ENCODE measurements at regions of chr6 and their contacts with region 1.

Region 1: GRCh38 chr6:32868257-32868788 is 14.3 kb downstream of the PSMB9 start:
- DNase-seq: peak; percentile 70
- ATAC-seq: peak; percentile 66
- H3K4me3 Mint-ChIP-seq: no peak overlapping the region
- H3K27ac Mint-ChIP-seq: no peak overlapping the region
- H3K4me1 Mint-ChIP-seq: peaks cover 35% of the 10 kb centered on the region
- H3K27me3 Mint-ChIP-seq: no peaks in the 10 kb centered on the region
- CTCF ChIP-seq: peak; percentile 42

Region 2: DNA sequence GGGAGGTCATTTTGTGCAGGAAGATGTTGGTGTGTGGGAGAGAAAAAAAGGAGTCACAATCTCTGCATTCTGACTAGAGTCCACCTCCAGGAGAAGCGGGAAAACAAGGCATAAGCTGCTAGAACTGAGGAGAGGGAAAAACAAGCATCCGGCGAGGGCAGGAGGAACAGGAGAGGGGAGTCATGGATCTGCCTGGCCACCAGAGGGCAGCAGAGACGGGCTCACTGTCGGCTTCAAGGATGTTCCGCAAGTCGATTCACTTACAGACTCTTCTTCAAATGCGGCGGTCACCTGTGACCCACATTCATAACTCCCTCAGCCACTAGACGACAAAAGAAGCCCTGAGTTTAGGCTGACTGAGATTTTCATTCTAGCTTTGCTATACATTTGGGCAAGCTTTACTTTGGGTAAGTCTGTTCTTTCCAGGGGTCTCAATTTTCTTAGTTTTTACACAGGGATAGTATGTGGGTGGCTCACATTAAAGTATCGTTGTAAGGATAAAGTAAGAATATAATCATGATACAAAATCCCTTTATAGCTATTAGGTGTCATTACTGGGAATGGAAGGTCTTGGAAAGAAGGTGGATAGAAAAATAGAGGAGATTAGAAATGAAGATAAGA is 454.8 kb before region 1 on chr6:
- CTCF ChIA-PET with region 1: interaction called, 39 read pairs
- POLR2A ChIA-PET with region 1: no interaction called
- intact Hi-C with region 1: loop called (anchors 1 kb)
- DNase-seq: peak; percentile 80
- ATAC-seq: peak; percentile 88
- H3K4me3 Mint-ChIP-seq: peak overlapping the region; percentile 75
- H3K27ac Mint-ChIP-seq: peak overlapping the region; percentile 5
- H3K4me1 Mint-ChIP-seq: peaks cover 14% of the 10 kb centered on the region
- H3K27me3 Mint-ChIP-seq: peaks cover 4% of the 10 kb centered on the region
- CTCF ChIP-seq: no peak

Region 3: DNA sequence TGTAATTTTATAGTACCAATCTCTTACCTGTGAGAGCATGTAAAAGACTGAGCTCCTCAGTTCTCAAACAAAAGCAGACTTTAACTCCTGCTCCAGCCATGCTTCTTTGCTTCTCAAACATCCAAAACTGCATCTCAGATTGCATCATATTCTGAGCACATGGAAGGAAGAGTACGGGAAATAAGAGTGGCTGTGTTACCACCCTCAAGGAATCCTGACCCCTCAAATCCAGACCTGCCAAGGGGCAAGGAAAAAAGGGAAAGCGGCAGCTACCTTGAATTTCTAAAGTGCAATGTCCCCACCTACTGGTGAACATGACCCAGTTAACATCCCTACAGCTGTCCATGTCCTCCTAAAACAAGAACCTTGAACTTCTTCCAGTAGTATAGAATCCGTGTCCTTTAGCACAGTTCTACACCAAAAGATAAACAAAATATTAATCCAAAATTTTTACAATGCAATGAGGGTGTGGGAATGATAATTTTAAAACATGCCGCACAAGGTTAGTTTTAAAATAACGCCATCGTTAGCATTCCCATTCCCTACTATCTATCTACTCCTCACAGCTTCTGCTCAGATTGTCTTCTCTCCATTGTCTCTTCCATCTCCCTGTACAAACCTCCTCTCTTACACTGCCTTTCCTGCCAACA is 167.8 kb before region 1 on chr6:
- CTCF ChIA-PET with region 1: interaction called, 24 read pairs
- POLR2A ChIA-PET with region 1: interaction called, 8 read pairs
- intact Hi-C with region 1: loop called (anchors 1 kb)
- DNase-seq: no peak
- ATAC-seq: peak; percentile 80
- H3K4me3 Mint-ChIP-seq: peak overlapping the region; percentile 86
- H3K27ac Mint-ChIP-seq: peak overlapping the region; percentile 91
- H3K4me1 Mint-ChIP-seq: peaks cover 32% of the 10 kb centered on the region
- H3K27me3 Mint-ChIP-seq: no peaks in the 10 kb centered on the region
- CTCF ChIP-seq: peak; percentile 32

Region 4: GRCh38 chr6:32816746-32817204 is 51.5 kb before region 1 on chr6 and contains the start of gene HLA-DOB:
- CTCF ChIA-PET with region 1: interaction called, 20 read pairs
- POLR2A ChIA-PET with region 1: interaction called, 4 read pairs
- intact Hi-C with region 1: no loop called
- DNase-seq: no peak
- ATAC-seq: peak; percentile 73
- H3K4me3 Mint-ChIP-seq: peak within 1 kb of the TSS; percentile 99
- H3K27ac Mint-ChIP-seq: peak within 1 kb of the TSS; percentile 99
- H3K4me1 Mint-ChIP-seq: peaks cover 96% of the 10 kb centered on the region
- H3K27me3 Mint-ChIP-seq: no peaks in the 10 kb centered on the region
- CTCF ChIP-seq: no peak
- total RNA-seq, gene HLA-DOB: 95.6 and 101 TPM in 2 replicates

Region 5: GRCh38 chr6:32843979-32844838 is 24.1 kb before region 1 on chr6 and contains the start of gene PSMB8:
- CTCF ChIA-PET with region 1: interaction called, 198 read pairs
- POLR2A ChIA-PET with region 1: interaction called, 904 read pairs
- intact Hi-C with region 1: no loop called
- DNase-seq: peak; percentile 96
- ATAC-seq: peak; percentile 78
- H3K4me3 Mint-ChIP-seq: peak within 1 kb of the TSS; percentile 99
- H3K27ac Mint-ChIP-seq: peak within 1 kb of the TSS; percentile 100
- H3K4me1 Mint-ChIP-seq: peaks cover 92% of the 10 kb centered on the region
- H3K27me3 Mint-ChIP-seq: no peaks in the 10 kb centered on the region
- CTCF ChIP-seq: no peak
- total RNA-seq, gene PSMB8: 182 and 194 TPM in 2 replicates

Region 6: DNA sequence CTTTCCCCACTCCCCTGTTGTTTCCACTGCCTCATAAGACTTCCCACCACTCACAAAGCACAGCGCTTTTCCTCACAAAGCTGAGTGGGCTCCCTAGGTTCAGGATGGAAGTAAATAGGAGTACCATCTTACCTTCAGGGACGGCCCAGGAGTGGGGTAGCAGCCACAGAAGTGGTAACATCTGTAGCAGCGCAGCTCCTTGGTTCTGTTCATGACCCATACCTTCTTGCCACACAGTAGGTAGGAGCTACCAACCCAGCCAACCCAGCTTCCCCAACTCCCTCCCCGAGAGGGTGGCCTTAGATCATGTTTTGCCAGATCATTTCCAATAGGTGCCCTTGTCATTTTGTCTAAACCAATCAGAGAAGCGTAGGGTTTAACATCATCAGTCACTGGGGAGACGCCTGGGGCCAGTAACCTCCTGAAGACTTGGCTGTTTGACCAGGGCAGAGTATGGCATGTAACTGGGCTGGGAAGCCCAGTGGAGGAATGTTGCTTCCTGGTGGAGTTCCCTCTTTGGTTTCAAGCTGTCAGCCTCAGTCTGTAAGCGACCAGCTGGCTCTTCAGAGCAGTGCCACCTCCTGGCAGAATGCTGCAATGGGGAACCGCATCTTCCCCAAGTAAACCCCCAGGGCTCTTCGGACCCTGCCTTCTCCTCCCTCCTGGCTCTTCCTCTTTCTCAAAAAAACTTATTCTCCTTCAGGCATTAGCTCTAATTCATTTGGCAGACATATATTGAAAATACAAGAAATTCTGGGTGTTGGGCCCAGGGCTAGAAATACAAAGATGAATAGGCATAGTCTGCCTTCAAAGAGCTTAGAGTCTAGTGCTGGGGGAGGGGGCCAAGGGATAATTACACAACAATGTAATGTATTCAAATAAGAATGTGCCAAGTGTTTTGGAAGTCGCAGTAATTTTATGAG is 84.8 kb after region 1 on chr6 and contains the start of gene HLA-DMA:
- CTCF ChIA-PET with region 1: interaction called, 14 read pairs
- POLR2A ChIA-PET with region 1: interaction called, 16 read pairs
- intact Hi-C with region 1: no loop called
- DNase-seq: peak; percentile 65
- ATAC-seq: peak; percentile 91
- H3K4me3 Mint-ChIP-seq: peak within 1 kb of the TSS; percentile 98
- H3K27ac Mint-ChIP-seq: peak within 1 kb of the TSS; percentile 97
- H3K4me1 Mint-ChIP-seq: peaks cover 85% of the 10 kb centered on the region
- H3K27me3 Mint-ChIP-seq: no peaks in the 10 kb centered on the region
- CTCF ChIP-seq: no peak
- total RNA-seq, gene HLA-DMA: 371 and 387 TPM in 2 replicates

Region 7: DNA sequence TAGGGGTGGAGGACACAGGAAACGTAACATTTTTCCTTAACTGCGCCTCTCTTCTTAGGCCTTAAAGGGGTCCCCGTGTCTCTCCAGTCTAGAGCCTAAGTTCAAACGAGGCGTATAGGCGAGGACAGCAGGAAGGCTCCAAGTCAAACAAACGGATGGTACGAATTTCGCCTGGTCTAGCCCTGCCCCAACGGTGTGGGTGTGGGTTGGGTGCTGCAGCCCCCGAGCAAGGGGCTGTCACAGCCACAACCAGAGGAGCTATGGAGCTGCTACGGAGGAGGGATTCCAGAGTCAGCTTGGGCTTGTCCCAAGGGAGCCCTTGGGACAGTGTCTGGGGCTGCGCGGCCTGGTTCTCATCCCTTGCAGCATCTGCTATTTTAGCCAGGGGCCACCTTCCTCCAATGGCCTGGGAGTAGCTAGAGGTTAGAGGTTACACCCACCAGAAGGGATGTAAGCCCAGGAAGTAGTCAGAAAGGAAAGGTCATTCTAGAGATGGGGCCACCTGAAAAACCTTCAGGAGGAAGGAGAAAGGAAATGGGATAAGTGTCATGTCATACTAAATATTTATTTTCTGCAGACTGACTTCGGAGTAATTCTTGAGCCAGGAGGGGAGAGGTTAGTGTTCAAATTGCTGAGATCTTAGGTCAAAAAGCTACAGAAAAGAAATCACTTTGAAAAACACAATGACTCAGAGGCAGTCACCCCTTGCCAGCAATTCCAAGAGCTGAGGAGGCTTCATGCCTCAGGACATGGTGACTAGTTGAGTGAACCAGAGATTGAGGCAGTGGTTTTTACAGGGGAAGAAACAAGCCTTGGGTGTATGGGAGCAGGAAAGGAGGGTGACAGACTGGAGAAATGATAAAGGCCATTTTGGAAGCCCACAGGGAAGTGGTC is 381.7 kb after region 1 on chr6:
- CTCF ChIA-PET with region 1: no interaction called
- POLR2A ChIA-PET with region 1: no interaction called
- intact Hi-C with region 1: no loop called
- DNase-seq: peak; percentile 22
- ATAC-seq: no peak
- H3K4me3 Mint-ChIP-seq: peak overlapping the region; percentile 91
- H3K27ac Mint-ChIP-seq: peak overlapping the region; percentile 91
- H3K4me1 Mint-ChIP-seq: peaks cover 28% of the 10 kb centered on the region
- H3K27me3 Mint-ChIP-seq: no peaks in the 10 kb centered on the region
- CTCF ChIP-seq: no peak

Region 8: DNA sequence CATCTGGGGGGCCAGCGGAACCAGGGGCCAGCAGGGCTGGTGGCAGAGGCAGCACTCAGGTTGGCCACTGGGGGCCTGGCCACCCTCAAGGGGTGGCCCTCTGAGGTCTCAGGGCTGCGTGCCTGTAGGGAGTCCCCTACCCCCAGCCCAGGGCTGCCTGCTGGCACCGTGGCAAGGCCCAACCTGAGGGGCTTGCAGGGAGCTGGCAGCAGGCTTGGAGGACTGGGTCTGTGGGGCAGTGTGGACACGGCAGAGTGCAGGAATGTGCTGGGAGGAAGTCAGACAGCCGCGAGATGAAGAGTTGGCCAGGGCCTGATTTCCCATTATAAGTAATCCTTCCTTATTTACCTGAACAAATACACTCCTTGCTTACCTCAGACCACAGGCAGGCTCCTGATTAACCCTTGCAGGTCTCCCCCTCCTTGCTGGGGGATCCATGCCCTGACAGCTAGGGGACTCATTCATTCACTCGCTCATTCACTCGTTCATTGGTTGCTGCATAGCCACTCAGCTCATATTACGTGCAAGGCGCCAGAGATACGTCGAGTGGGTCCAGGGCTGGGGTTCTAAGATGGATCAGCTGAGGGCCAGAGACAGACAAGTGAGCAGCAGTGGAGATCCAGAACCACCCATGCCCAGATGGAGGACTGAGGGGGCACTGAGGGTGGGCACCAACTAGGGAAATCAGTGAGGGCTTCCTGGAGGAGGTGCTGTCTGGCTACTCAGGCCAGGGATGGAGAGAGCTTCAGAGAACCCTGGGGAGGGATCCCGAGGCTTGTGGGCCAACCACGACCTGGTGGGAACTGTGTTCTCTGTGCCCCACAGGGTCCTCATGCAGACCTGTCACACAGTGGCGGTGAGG is 1687.9 kb after region 1 on chr6 and contains the start of gene SPDEF:
- CTCF ChIA-PET with region 1: no interaction called
- POLR2A ChIA-PET with region 1: no interaction called
- intact Hi-C with region 1: no loop called
- DNase-seq: no peak
- ATAC-seq: no peak
- H3K4me3 Mint-ChIP-seq: no peak within 1 kb of the TSS
- H3K27ac Mint-ChIP-seq: no peak within 1 kb of the TSS
- H3K4me1 Mint-ChIP-seq: peaks cover 4% of the 10 kb centered on the region
- H3K27me3 Mint-ChIP-seq: no peaks in the 10 kb centered on the region
- CTCF ChIP-seq: no peak
- total RNA-seq, gene SPDEF: 0.11 TPM in 1 of 2 replicates, not detected in the other